Heart right ventricle (tissue), 16 donors: ENCODE measurements at regions of chr2 and their contacts with region 1.

Region 1: GRCh38 chr2:239660390-239661230 is 259.8 kb upstream of the HDAC4 start:
- DNase-seq: no peak
- ATAC-seq: peak in 2 of 8 donors; percentile 27 to 33
- H3K4me3 ChIP-seq: no peak overlapping the region
- H3K27ac ChIP-seq: no peak overlapping the region
- H3K4me1 ChIP-seq: peaks cover 0 to 19% (median 0%) of the 10 kb centered on the region in 9 donors
- H3K27me3 ChIP-seq: peaks cover 4 to 78% (median 49%) of the 10 kb centered on the region in 7 donors
- CTCF ChIP-seq: no peak

Region 2: GRCh38 chr2:239465017-239466001 is 195.3 kb before region 1 on chr2:
- intact Hi-C with region 1: no loop called
- DNase-seq: peak; percentile 49 to 68
- ATAC-seq: peak; percentile 67 to 92 (median 84)
- H3K4me3 ChIP-seq: peak overlapping the region in 1 of 10 donors; percentile 20
- H3K27ac ChIP-seq: peak overlapping the region in 4 of 10 donors; percentile 5 to 78 (median 36)
- H3K4me1 ChIP-seq: peaks cover 0 to 29% (median 7%) of the 10 kb centered on the region in 9 donors
- H3K27me3 ChIP-seq: peaks cover 0 to 9% (median 0%) of the 10 kb centered on the region in 7 donors
- CTCF ChIP-seq: no peak

Region 3: DNA sequence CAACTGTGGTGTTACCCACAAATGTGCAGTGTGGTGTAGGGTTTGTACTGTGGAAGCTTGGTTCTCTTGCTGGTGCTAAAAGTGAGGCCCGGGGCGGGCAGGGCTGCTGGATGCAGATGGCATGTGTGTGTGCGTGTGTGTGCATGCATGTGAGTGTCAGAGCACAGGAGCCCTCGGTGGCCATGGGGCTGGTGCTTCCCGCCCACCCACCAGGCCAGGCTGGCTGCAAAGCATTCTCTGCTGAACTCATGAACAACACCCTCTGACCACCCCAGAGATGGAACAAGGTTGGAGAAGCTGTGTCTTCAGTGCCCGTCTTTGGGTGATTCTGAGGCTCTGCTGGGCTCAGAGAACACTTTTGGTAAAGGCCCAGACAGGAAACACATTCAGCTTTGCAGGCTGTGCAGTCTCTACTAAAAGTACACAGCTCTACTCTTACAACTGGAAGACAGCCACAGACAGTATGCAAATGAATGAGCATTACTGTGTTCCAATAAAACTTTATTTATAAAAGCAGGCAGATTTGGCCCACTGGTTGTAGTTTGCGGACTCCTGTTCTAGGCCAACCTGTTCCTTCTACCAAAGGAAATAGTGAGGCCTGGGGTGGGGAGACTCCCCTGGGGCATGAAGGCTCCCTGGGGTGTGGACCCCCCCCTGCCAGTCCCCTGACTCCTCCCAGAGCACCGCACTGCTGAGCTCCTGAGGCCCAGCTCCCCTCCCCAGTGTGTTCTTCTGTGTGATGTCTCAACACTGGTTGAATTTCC is 34.5 kb before region 1 on chr2:
- intact Hi-C with region 1: loop called in 1 of 10 experiments (anchors 2 kb)
- DNase-seq: no peak
- ATAC-seq: peak in 1 of 8 donors; percentile 24
- H3K4me3 ChIP-seq: no peak overlapping the region
- H3K27ac ChIP-seq: no peak overlapping the region
- H3K4me1 ChIP-seq: peaks cover 0 to 4% (median 0%) of the 10 kb centered on the region in 9 donors
- H3K27me3 ChIP-seq: peaks cover 0 to 20% (median 5%) of the 10 kb centered on the region in 7 donors
- CTCF ChIP-seq: no peak

Region 4: GRCh38 chr2:239682518-239682917 is 21.9 kb after region 1 on chr2:
- intact Hi-C with region 1: loop called in 1 of 10 experiments (anchors 1 kb)
- DNase-seq: no peak
- ATAC-seq: no peak
- H3K4me3 ChIP-seq: no peak overlapping the region
- H3K27ac ChIP-seq: no peak overlapping the region
- H3K4me1 ChIP-seq: no peaks in the 10 kb centered on the region
- H3K27me3 ChIP-seq: peaks cover 0 to 54% (median 36%) of the 10 kb centered on the region in 7 donors
- CTCF ChIP-seq: no peak